HepG2 (cell line): ENCODE measurements at regions of chr1 and their contacts with region 1.

Region 1: DNA sequence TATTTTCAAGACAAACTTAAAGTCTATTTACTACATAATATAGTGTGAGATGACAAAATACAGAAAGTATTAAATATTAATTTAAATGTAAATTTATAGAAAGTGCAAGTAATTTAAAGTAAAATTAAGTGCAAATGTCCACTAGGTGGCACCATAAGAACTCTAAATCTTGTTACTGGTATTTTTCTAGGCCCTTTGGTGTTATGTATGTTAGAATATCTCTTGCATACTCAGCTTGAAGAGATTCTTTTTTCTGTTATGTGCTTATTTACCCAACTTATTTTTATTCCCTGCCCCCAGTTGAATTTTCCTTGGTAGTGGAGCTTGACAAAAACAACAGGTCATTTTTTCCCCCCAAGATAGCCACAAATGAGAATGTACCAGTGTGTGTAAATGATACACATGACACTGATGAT is 71.5 kb downstream of the RPS6KC1 start:
- DNase-seq: peak; percentile 48
- ATAC-seq: no peak
- H3K4me3 ChIP-seq: no peak overlapping the region
- H3K27ac ChIP-seq: no peak overlapping the region
- H3K4me1 ChIP-seq: peaks cover 19% of the 10 kb centered on the region
- H3K27me3 ChIP-seq: no peaks in the 10 kb centered on the region
- CTCF ChIP-seq: peak; percentile 51
- EP300 ChIP-seq: no peak
- POLR2A ChIP-seq: no peak
- RAD21 ChIP-seq: no peak

Region 2: GRCh38 chr1:213154056-213154685 is 31.6 kb after region 1 on chr1:
- CTCF ChIA-PET with region 1: no interaction called
- POLR2A ChIA-PET with region 1: no interaction called
- in situ Hi-C with region 1: no loop called
- intact Hi-C with region 1: no loop called
- DNase-seq: no peak
- ATAC-seq: peak; percentile 39; the same call in 1 of the 3 replicates
- H3K4me3 ChIP-seq: no peak overlapping the region
- H3K27ac ChIP-seq: no peak overlapping the region
- H3K4me1 ChIP-seq: no peaks in the 10 kb centered on the region
- H3K27me3 ChIP-seq: no peaks in the 10 kb centered on the region
- CTCF ChIP-seq: no peak
- EP300 ChIP-seq: no peak
- POLR2A ChIP-seq: no peak
- RAD21 ChIP-seq: no peak

Region 3: DNA sequence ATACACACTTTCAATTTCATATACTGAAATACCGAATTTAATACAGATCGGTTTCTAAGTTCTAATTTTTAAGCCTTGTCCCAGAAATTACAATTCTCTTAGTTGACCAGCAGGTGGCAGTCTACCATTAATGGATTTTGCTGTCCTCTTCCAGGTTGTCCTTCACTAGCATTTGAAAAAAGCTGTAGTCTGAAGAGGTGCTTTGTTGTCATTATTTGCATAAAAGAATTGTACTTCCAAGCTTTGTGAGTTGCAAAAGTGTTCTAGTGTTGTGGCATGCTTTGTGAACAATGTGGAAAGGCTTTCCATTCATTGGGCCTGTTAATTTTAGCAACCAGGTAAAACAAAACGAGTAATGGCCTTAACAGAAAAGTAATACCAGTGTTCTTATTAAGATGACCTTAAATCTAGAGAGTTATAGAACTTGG is 122.2 kb after region 1 on chr1:
- CTCF ChIA-PET with region 1: no interaction called
- POLR2A ChIA-PET with region 1: no interaction called
- in situ Hi-C with region 1: no loop called
- intact Hi-C with region 1: loop called (anchors 5 kb)
- DNase-seq: peak; percentile 73
- ATAC-seq: peak; percentile 54
- H3K4me3 ChIP-seq: no peak overlapping the region
- H3K27ac ChIP-seq: no peak overlapping the region
- H3K4me1 ChIP-seq: peaks cover 19% of the 10 kb centered on the region
- H3K27me3 ChIP-seq: no peaks in the 10 kb centered on the region
- CTCF ChIP-seq: peak; percentile 79
- EP300 ChIP-seq: no peak
- POLR2A ChIP-seq: no peak
- RAD21 ChIP-seq: peak; percentile 82

Region 4: DNA sequence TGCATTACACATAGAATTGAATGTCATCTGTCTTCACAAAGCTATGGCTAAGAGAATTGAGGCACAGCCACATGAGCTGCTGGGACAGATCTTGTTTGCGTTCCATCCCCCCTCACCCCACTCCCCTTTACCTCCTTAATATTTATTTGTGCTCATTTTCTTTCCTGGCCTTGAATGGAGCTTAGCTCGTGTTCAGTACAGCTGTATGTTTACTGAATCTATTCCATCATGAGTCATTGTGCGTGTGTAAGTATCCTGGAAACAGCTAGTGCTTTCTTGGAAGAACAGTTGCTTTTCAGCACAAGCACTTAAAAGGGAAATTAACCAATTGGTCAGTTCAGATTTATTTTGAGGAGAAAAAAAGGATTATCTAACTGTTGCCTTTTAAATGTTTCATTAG is 880.0 kb after region 1 on chr1:
- CTCF ChIA-PET with region 1: no interaction called
- POLR2A ChIA-PET with region 1: no interaction called
- in situ Hi-C with region 1: no loop called
- intact Hi-C with region 1: loop called (anchors 10 kb)
- DNase-seq: peak; percentile 78
- ATAC-seq: peak; percentile 72
- H3K4me3 ChIP-seq: no peak overlapping the region
- H3K27ac ChIP-seq: peak overlapping the region; percentile 50
- H3K4me1 ChIP-seq: peaks cover 83% of the 10 kb centered on the region
- H3K27me3 ChIP-seq: no peaks in the 10 kb centered on the region
- CTCF ChIP-seq: no peak
- EP300 ChIP-seq: peak in 1 of 2 experiments; percentile 78; a peak in 2 of 4 replicates
- POLR2A ChIP-seq: no peak
- RAD21 ChIP-seq: no peak

Region 5: DNA sequence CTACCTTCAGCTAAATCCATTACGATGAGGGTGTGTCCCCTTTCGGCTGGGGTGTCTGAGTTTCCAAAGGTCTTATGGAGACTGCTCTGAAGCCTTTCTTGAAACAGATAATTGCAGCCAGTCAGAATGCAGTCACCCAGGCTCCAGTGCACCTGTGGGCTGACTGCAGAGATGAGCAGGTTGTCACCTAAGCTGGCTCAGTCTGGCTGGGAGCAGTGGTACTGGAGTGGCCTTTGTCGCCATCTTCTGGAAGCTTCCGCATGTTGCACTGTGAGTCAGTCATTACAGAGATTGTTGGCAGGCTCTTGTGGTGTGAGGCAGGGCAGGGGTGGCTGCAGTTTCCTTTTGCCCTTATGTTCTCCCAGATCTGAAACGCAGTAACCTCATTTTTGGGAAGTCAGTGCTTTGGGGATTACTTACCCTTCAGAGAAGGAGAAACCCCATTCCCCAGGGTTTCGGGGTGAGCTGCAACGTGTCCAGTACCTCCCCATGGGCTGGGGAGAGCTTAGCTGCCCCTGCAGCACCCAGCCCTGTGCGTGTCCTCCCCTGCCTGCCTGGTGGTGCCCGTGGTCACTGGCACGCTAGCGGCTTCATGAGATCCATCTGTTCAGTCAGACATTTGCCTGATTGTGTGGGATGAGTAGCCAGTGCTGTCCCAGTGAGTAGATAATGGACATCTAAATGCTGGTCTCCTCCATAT is 1206.4 kb after region 1 on chr1:
- CTCF ChIA-PET with region 1: interaction called, 4 read pairs
- POLR2A ChIA-PET with region 1: no interaction called
- in situ Hi-C with region 1: no loop called
- intact Hi-C with region 1: loop called (anchors 10 kb)
- DNase-seq: peak; percentile 65
- ATAC-seq: peak; percentile 91
- H3K4me3 ChIP-seq: no peak overlapping the region
- H3K27ac ChIP-seq: no peak overlapping the region
- H3K4me1 ChIP-seq: no peaks in the 10 kb centered on the region
- H3K27me3 ChIP-seq: no peaks in the 10 kb centered on the region
- CTCF ChIP-seq: peak; percentile 95
- EP300 ChIP-seq: no peak
- POLR2A ChIP-seq: no peak
- RAD21 ChIP-seq: peak; percentile 96